AG04450 (cell line): ENCODE measurements at regions of chr14 and their contacts with region 1.

Region 1: DNA sequence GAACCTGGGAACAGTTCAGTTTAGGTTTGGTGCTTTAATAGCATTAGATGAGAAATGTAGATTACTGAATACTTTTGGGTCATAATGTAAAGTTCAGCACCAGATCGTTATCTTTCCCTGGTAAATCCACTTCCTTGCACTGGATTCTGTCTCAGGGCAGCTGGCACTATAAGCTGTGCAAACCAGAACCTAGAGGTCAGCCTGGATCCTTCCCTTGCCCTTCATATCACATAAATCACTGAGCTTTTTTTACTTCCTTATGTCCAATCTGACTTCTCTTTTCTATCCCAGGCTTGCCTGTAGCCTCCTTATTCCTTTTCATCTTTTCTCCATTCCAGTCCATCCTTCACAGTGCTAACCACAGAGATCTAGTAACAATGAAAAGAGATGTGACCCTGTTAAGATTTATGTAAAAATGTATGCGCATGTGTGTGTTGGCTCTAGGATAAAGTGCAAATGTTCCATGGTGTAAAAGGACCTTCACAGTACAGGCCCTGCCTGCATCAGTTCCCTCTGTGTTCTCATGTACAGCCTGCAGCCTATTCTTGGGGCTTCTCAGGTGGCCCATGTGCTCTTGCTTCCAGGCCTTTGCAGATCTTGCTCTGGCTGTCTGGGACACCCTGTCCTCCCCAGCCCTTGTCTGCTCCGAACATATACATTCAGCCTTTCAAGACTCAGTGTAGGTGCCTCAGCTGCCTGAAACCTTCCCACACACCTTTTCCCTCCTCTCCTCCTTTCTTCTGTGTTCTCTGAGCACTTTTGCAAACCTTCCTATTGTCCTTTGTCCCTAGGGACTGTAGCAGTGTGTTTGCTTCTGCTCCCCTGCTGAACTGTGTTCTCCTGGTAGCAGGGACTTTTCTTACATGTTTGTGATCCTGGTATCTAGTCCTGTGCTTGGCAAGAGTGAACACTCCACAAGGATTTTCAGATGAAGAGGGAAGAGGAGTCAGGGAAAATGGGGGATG is 30.0 kb downstream of the PELI2 start:
- DNase-seq: no peak
- H3K4me3 ChIP-seq: no peak overlapping the region
- H3K27ac ChIP-seq: no peak overlapping the region
- H3K27me3 ChIP-seq: no peaks in the 10 kb centered on the region
- CTCF ChIP-seq: no peak

Region 2: GRCh38 chr14:55599200-55599879 is 548.9 kb before region 1 on chr14:
- CTCF ChIA-PET with region 1: interaction called, 12 read pairs
- POLR2A ChIA-PET with region 1: no interaction called
- DNase-seq: no peak
- H3K4me3 ChIP-seq: no peak overlapping the region
- H3K27ac ChIP-seq: no peak overlapping the region
- H3K27me3 ChIP-seq: no peaks in the 10 kb centered on the region
- CTCF ChIP-seq: no peak

Region 3: DNA sequence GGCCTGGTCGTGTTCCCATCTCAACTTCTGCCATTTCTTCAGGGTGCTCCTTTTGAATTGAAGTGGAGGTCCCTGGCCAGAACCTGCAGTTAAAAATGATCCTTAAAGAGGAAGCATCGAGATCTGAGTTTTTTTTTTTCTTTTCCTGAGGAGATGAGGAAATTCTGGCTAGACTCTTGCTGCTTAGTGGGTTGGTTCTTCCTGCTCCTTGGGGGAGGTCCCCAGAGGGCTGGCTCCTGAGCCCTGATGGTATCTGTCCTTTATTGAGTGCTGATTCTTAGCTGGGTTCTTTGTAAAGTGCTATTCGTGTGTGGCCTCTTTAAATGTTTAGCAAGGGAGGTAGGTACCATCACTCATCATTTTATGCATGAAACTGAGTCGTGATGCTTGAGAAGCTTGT is 18.3 kb before region 1 on chr14:
- CTCF ChIA-PET with region 1: no interaction called
- POLR2A ChIA-PET with region 1: no interaction called
- DNase-seq: no peak
- H3K4me3 ChIP-seq: no peak overlapping the region
- H3K27ac ChIP-seq: no peak overlapping the region
- H3K27me3 ChIP-seq: no peaks in the 10 kb centered on the region
- CTCF ChIP-seq: no peak

Region 4: GRCh38 chr14:56189307-56189706 is 41.1 kb after region 1 on chr14:
- CTCF ChIA-PET with region 1: no interaction called
- POLR2A ChIA-PET with region 1: no interaction called
- DNase-seq: peak; percentile 55
- H3K4me3 ChIP-seq: no peak overlapping the region
- H3K27ac ChIP-seq: no peak overlapping the region
- H3K27me3 ChIP-seq: no peaks in the 10 kb centered on the region
- CTCF ChIP-seq: no peak